Kidney (tissue), 22 donors: ENCODE measurements at regions of chr12 and their contacts with region 1.

Region 1: DNA sequence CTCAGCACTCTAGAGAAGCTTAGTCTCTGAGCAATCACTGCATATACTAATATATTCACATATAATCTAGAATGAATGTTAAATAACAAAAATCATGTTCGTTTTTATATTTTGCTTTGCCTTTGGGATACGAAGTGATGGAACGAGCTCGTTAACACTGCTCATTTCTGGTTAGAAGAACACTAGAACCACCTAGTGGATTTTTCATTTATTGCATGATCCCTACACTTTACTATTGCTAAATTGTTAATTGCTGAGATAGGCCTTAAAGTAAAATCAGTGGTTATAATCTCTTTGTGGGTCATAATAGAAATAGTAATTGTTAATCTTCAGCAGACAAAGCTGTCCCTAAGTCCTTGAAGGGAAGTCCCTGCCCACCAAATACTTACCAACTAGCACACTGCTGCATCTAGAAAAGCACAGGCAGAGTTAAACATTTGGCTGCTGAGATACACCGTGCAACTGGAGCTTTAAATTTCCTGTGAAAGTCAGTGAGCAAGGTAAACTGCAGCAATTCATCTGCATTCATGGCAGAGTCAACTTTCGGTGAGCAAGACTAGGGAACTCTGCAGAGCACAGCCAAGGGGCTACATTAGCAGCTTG is 353.7 kb downstream of the APAF1 start:
- DNase-seq: peak in 2 of 5 donors; percentile 68 to 71
- H3K4me3 ChIP-seq: no peak overlapping the region
- H3K27ac ChIP-seq: no peak overlapping the region
- H3K4me1 ChIP-seq: no peaks in the 10 kb centered on the region
- H3K27me3 ChIP-seq: no peaks in the 10 kb centered on the region
- CTCF ChIP-seq: peak; percentile 46

Region 2: GRCh38 chr12:98701166-98701565 is 297.6 kb before region 1 on chr12:
- intact Hi-C with region 1: loop called (anchors 10 kb)
- DNase-seq: no peak
- H3K4me3 ChIP-seq: no peak overlapping the region
- H3K27ac ChIP-seq: no peak overlapping the region
- H3K4me1 ChIP-seq: peaks cover 0 to 2% (median 0%) of the 10 kb centered on the region in 3 donors
- H3K27me3 ChIP-seq: no peaks in the 10 kb centered on the region
- CTCF ChIP-seq: no peak

Region 3: DNA sequence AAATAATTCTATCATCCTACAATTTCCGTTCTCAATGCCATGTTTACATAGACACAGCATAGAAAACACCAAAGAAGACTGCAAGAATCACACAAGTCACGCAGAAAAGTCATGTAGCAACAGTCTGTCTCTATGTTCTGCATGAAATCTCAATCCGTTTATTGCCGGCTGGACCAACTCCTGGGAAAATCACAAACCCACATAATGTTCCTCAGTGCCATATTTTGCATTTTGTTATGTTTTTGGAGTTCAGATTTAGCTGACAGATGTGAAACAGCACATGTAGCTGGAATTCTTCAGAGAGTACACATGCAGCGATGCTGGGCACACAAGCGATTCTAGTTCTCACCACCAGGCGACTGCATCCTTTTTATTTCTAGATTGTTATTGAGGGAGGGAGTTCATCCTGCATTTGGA is 160.6 kb before region 1 on chr12:
- intact Hi-C with region 1: no loop called
- DNase-seq: no peak
- H3K4me3 ChIP-seq: no peak overlapping the region
- H3K27ac ChIP-seq: no peak overlapping the region
- H3K4me1 ChIP-seq: no peaks in the 10 kb centered on the region
- H3K27me3 ChIP-seq: no peaks in the 10 kb centered on the region
- CTCF ChIP-seq: no peak